Right cardiac atrium (tissue), 5 donors: ENCODE measurements at regions of chrX and their contacts with region 1.

Region 1: GRCh38 chrX:134520860-134521390 is 61.0 kb downstream of the HPRT1 start:
- DNase-seq: no peak
- ATAC-seq: peak; percentile 47 to 62
- H3K4me3 ChIP-seq: no peak overlapping the region
- H3K27ac ChIP-seq: no peak overlapping the region
- H3K4me1 ChIP-seq: no peaks in the 10 kb centered on the region
- H3K27me3 ChIP-seq: no peaks in the 10 kb centered on the region

Region 2: GRCh38 chrX:134745636-134746409 is 224.9 kb after region 1 on chrX:
- intact Hi-C with region 1: loop called in 3 of 4 experiments (anchors 5 to 10 kb)
- DNase-seq: peak in 1 of 3 donors; percentile 56
- ATAC-seq: no peak
- H3K4me3 ChIP-seq: no peak overlapping the region
- H3K27ac ChIP-seq: no peak overlapping the region
- H3K4me1 ChIP-seq: no peaks in the 10 kb centered on the region
- H3K27me3 ChIP-seq: no peaks in the 10 kb centered on the region

Region 3: DNA sequence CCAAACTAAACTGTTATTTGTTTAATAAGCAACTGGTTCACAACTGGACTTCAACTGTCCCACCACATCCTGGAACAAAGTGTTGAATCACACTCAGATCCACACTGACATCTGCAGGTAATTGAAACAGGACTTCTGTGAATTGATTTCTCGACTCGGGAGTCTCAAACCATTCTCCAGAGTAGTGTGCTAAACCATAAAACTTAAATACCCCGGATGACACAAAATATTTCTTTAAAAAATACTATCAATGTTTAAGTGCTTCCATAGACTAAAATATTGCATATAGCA is 232.7 kb after region 1 on chrX:
- intact Hi-C with region 1: loop called in 3 of 4 experiments (anchors 5 to 10 kb)
- DNase-seq: no peak
- ATAC-seq: no peak
- H3K4me3 ChIP-seq: no peak overlapping the region
- H3K27ac ChIP-seq: no peak overlapping the region
- H3K4me1 ChIP-seq: no peaks in the 10 kb centered on the region
- H3K27me3 ChIP-seq: no peaks in the 10 kb centered on the region

Region 4: DNA sequence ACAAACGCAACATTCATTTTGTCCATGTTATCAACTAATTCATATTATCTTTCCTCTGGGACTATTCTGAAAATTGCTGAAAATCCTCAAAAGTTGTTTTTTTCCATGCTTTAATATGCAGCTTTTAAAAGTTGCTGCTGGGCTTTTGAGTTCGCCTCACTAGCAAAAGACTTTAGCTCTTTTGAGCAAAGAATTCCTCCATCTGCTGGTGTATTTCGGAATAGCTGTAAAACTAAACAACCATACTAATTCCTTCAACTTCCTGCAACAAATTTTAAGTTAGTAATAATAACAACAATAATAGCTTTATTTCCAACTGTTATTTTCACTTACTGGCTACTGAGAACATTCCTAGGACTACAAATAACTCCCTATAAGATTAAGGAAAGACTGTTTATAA is 261.9 kb after region 1 on chrX:
- intact Hi-C with region 1: loop called in 1 of 4 experiments (anchors 10 kb)
- DNase-seq: no peak
- ATAC-seq: no peak
- H3K4me3 ChIP-seq: no peak overlapping the region
- H3K27ac ChIP-seq: no peak overlapping the region
- H3K4me1 ChIP-seq: no peaks in the 10 kb centered on the region
- H3K27me3 ChIP-seq: no peaks in the 10 kb centered on the region